GM12878 (cell line): ENCODE measurements at regions of chr19 and their contacts with region 1.

Region 1: DNA sequence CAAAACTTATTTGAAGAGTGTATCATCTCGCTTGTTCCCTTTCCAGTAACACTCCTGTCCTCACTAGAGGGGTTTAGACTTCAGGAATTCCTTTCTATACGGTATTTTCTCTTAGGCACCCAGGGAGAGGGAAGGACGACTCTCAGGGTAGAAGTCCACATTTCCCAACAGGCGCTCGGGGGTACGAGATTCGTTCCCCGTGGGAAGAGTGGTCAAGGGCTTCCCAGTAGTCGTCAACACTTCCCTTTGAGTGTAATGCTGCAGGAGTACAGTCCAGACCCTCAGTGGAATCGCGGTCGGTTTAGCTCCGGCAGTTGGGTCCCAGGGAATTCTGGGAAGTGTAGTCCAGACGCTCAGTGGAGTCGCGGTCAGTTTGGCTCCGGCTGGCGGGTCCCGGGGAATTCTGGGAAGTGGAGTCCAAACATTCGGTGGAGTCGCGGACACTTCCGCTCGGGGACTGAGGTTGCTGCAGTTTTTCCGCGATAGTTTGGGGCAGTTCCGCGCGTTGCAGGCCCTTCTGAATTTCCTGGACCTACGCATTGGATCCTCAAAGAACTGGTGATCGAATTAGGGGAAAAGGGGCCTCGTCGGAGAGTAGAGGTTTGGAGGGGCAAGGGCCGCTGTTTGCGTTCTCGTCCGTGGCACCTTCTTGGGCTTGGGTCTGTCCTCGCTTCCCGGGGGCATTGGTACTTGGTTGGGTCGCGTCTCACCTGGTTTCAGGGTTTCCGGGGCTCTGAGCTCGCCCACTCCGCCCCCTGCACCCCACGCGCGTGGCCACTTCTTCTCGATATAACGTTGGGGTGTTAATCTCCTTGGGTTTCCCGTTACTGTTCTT is at the start of gene ZNF224:
- DNase-seq: peak; percentile 57
- ATAC-seq: peak; percentile 95
- H3K4me3 ChIP-seq: peak within 1 kb of the TSS; percentile 97
- H3K27ac ChIP-seq: peak within 1 kb of the TSS; percentile 43
- H3K4me1 ChIP-seq: no peaks in the 10 kb centered on the region
- H3K27me3 ChIP-seq: no peaks in the 10 kb centered on the region
- CTCF ChIP-seq: no peak
- EP300 ChIP-seq: no peak
- POLR2A ChIP-seq: peak; percentile 69
- RAD21 ChIP-seq: no peak
- polyA plus RNA-seq, gene ZNF224: 6.8 to 7.8 TPM

Region 2: DNA sequence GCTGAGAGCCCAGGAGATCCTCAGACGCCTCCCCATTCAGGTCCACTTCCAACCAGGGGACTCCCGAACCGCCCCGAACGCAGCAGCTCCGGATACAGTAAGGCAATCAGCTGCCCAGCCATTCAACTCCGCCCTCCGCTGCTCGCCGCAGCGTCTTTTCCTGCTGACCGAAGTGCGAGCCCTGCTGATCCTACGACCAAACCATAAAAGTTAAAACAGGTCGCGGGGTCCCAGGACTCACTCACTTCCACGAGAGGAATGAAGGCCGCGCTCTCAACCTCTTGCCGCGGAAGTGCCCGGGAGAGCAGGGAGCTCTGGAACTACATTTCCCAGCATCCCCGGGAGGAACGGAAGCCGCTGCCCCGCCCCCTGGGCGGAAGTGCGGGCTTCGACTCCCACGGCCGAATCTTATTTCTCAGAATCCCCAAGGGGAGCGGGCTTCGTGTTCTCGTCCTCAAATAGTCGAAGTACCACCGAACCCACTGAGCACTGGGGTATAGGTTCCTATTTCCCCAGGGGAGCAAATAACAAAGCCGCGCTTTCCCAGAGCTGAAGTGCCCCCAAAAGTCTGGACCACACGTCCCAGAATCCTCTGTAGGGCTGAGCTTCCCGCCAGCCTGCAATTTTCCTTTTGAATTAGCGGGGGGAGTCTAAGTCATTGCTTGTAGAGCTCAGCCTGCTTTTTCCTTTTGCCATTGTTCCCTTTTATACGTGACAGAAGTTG is 159.0 kb before region 1 on chr19 and contains the start of gene ZNF45:
- CTCF ChIA-PET with region 1: interaction called, 8 read pairs
- POLR2A ChIA-PET with region 1: interaction called, 3 read pairs
- RAD21 ChIA-PET with region 1: interaction called, 3 read pairs
- SMC1A ChIA-PET with region 1: no interaction called
- in situ Hi-C with region 1: no loop called
- intact Hi-C with region 1: loop called (anchors 10 kb)
- DNase-seq: peak; percentile 60
- ATAC-seq: peak; percentile 99
- H3K4me3 ChIP-seq: peak within 1 kb of the TSS; percentile 82
- H3K27ac ChIP-seq: peak within 1 kb of the TSS; percentile 67
- H3K4me1 ChIP-seq: no peaks in the 10 kb centered on the region
- H3K27me3 ChIP-seq: no peaks in the 10 kb centered on the region
- CTCF ChIP-seq: no peak
- EP300 ChIP-seq: no peak
- POLR2A ChIP-seq: peak; percentile 61; the same call in 1 of the 2 replicates
- RAD21 ChIP-seq: no peak
- polyA plus RNA-seq, gene ZNF45: 4.2 to 5.0 TPM

Region 3: GRCh38 chr19:44002566-44003460 is 91.3 kb before region 1 on chr19 and contains the start of gene ZNF230:
- CTCF ChIA-PET with region 1: interaction called, 10 read pairs
- POLR2A ChIA-PET with region 1: no interaction called
- RAD21 ChIA-PET with region 1: no interaction called
- SMC1A ChIA-PET with region 1: interaction called, 5 read pairs
- in situ Hi-C with region 1: no loop called
- intact Hi-C with region 1: loop called (anchors 1 kb)
- DNase-seq: peak; percentile 89
- ATAC-seq: peak; percentile 98
- H3K4me3 ChIP-seq: peak within 1 kb of the TSS; percentile 81
- H3K27ac ChIP-seq: peak within 1 kb of the TSS; percentile 92
- H3K4me1 ChIP-seq: peaks cover 7% of the 10 kb centered on the region
- H3K27me3 ChIP-seq: no peaks in the 10 kb centered on the region
- CTCF ChIP-seq: no peak
- EP300 ChIP-seq: peak in 1 of 2 experiments; percentile 23; a peak in 1 of 4 replicates
- POLR2A ChIP-seq: peak; percentile 67
- RAD21 ChIP-seq: no peak
- polyA plus RNA-seq, gene ZNF230: 1.8 to 2.5 TPM

Region 4: GRCh38 chr19:44071824-44072542 is 22.2 kb before region 1 on chr19 and contains the start of gene ZNF284:
- CTCF ChIA-PET with region 1: interaction called, 16 read pairs
- POLR2A ChIA-PET with region 1: interaction called, 5 read pairs
- RAD21 ChIA-PET with region 1: no interaction called
- SMC1A ChIA-PET with region 1: interaction called, 6 read pairs
- in situ Hi-C with region 1: no loop called
- intact Hi-C with region 1: no loop called
- DNase-seq: peak; percentile 78
- ATAC-seq: peak; percentile 100
- H3K4me3 ChIP-seq: peak within 1 kb of the TSS; percentile 66
- H3K27ac ChIP-seq: peak within 1 kb of the TSS; percentile 36; the same call in 1 of the 2 replicates
- H3K4me1 ChIP-seq: no peaks in the 10 kb centered on the region
- H3K27me3 ChIP-seq: no peaks in the 10 kb centered on the region
- CTCF ChIP-seq: no peak
- EP300 ChIP-seq: no peak
- POLR2A ChIP-seq: peak; percentile 45; the same call in 1 of the 2 replicates
- RAD21 ChIP-seq: no peak
- polyA plus RNA-seq, gene ZNF284: 0.37 to 0.68 TPM

Region 5: DNA sequence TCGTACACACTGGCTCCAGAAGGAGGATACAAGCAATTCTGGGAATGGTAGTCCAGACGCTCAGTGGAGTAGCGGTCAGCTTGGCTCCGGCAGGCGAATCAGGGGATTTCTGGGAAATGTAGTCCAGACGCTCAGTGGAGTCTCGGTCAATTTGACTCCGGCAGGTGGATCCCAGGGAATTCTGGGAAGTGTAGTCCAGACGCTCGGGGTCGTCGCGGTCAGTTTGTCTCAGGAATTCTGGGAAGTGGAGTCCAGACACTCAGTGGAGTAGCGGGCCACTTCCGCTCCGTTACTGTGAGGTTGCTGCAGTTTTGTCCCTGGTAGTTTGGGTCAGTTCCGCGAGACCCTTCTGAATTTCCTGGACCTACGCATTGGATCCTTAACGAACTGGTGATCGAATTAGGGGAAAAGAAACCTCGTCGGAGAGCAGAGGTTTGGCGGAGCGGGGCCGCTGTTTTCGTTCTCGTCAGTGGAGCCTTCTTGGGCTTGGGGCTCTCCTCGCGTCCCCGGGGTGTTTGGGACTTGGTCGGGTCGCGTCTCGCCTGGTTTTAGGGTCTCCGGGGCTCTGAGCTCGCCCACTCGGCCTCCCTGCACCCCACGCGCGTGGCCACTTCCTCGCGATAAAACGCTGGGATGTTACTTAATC is 19.1 kb after region 1 on chr19 and contains the start of gene ZNF225:
- CTCF ChIA-PET with region 1: interaction called, 11 read pairs
- POLR2A ChIA-PET with region 1: interaction called, 3 read pairs
- RAD21 ChIA-PET with region 1: interaction called, 4 read pairs
- SMC1A ChIA-PET with region 1: interaction called, 3 read pairs
- in situ Hi-C with region 1: no loop called
- intact Hi-C with region 1: loop called (anchors 1 kb)
- DNase-seq: peak; percentile 87
- ATAC-seq: peak; percentile 98
- H3K4me3 ChIP-seq: peak within 1 kb of the TSS; percentile 91
- H3K27ac ChIP-seq: peak within 1 kb of the TSS; percentile 73
- H3K4me1 ChIP-seq: no peaks in the 10 kb centered on the region
- H3K27me3 ChIP-seq: no peaks in the 10 kb centered on the region
- CTCF ChIP-seq: no peak
- EP300 ChIP-seq: no peak
- POLR2A ChIP-seq: peak; percentile 71
- RAD21 ChIP-seq: no peak
- polyA plus RNA-seq, gene ZNF225: 1.3 to 1.4 TPM

Region 6: GRCh38 chr19:44131955-44132354 is 37.8 kb after region 1 on chr19:
- CTCF ChIA-PET with region 1: no interaction called
- POLR2A ChIA-PET with region 1: no interaction called
- RAD21 ChIA-PET with region 1: no interaction called
- SMC1A ChIA-PET with region 1: no interaction called
- in situ Hi-C with region 1: no loop called
- intact Hi-C with region 1: no loop called
- DNase-seq: no peak
- ATAC-seq: no peak
- H3K4me3 ChIP-seq: no peak overlapping the region
- H3K27ac ChIP-seq: no peak overlapping the region
- H3K4me1 ChIP-seq: no peaks in the 10 kb centered on the region
- H3K27me3 ChIP-seq: no peaks in the 10 kb centered on the region
- CTCF ChIP-seq: no peak
- EP300 ChIP-seq: no peak
- POLR2A ChIP-seq: no peak
- RAD21 ChIP-seq: no peak

Region 7: GRCh38 chr19:44255705-44256411 is 161.7 kb after region 1 on chr19:
- CTCF ChIA-PET with region 1: no interaction called
- POLR2A ChIA-PET with region 1: no interaction called
- RAD21 ChIA-PET with region 1: no interaction called
- SMC1A ChIA-PET with region 1: no interaction called
- in situ Hi-C with region 1: no loop called
- intact Hi-C with region 1: no loop called
- DNase-seq: no peak
- ATAC-seq: no peak
- H3K4me3 ChIP-seq: no peak overlapping the region
- H3K27ac ChIP-seq: no peak overlapping the region
- H3K4me1 ChIP-seq: no peaks in the 10 kb centered on the region
- H3K27me3 ChIP-seq: no peaks in the 10 kb centered on the region
- CTCF ChIP-seq: no peak
- EP300 ChIP-seq: no peak
- POLR2A ChIP-seq: no peak
- RAD21 ChIP-seq: no peak